Endothelial cell of umbilical vein (primary cell): ENCODE measurements at regions of chr3 and their contacts with region 1.

Region 1: DNA sequence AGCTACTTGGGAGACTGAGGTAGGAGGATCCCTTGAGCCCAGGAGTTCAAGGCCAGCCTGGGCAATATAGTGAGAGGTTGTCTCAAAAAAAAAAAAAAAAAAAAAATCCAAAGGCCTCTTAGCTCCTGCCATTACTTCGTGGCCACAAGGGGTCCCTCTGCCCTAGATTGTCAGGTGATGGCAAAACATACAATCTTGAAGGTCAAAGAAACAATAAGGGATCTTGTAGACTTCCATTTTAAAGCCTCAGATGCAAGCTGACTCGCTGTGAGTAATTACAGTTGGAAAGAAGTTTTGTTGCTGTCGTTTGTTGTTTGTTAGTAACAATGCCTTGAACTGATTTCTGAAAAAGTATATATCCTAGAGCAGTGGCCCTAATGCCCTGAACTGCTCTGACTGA is 55.9 kb upstream of the PLCL2 start:
- DNase-seq: peak; percentile 80
- H3K4me3 ChIP-seq: no peak overlapping the region
- H3K27ac ChIP-seq: peak overlapping the region; percentile 63
- H3K4me1 ChIP-seq: peaks cover 6% of the 10 kb centered on the region
- H3K27me3 ChIP-seq: no peaks in the 10 kb centered on the region
- CTCF ChIP-seq: peak; percentile 63 to 66
- POLR2A ChIP-seq: no peak

Region 2: DNA sequence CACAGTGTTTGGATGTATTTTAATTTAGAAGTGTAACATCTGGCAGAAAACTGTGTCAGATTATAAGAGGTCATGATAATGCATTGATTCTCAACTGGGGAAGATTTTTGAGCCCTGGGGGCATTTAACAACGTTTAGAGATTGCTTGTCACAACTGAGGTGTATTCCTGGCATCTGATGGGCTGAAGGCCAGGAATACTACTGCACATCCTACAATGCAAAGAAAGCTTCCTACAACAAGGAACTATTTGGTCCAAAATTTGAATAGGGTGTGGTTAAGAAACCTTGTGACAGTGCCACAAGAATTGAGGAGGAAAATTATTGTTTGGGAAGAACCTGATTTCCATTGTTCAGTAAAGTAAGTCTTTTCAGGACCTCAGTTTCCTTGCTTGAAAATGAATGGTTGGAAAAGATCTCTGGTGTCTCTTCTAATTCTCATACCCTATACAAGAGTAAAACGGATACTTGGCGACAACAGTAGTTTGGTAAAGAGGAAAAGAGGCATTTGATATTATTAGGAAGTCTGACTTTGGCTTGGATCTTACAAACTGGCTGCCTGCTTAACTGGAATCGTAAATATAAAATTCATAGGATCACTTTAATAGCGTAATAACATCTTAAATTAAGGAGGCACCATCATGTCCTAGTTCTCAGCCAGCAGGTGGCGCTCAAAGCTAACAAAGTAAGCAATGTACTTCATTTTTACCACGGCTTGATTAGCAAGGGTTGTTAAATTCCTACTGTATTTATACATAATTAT is 227.9 kb before region 1 on chr3:
- CTCF ChIA-PET with region 1: interaction called, 14 read pairs
- POLR2A ChIA-PET with region 1: no interaction called
- dilution Hi-C with region 1: no loop called
- intact Hi-C with region 1: loop called (anchors 5 kb)
- DNase-seq: peak; percentile 80
- H3K4me3 ChIP-seq: no peak overlapping the region
- H3K27ac ChIP-seq: no peak overlapping the region
- H3K4me1 ChIP-seq: no peaks in the 10 kb centered on the region
- H3K27me3 ChIP-seq: peaks cover 0 to 6% of the 10 kb centered on the region in 2 experiments
- CTCF ChIP-seq: peak; percentile 56 to 61
- POLR2A ChIP-seq: no peak

Region 3: GRCh38 chr3:16884084-16884747 is 55.4 kb after region 1 on chr3:
- CTCF ChIA-PET with region 1: interaction called, 42 read pairs
- POLR2A ChIA-PET with region 1: no interaction called
- dilution Hi-C with region 1: no loop called
- intact Hi-C with region 1: loop called (anchors 1 kb)
- DNase-seq: peak; percentile 55
- H3K4me3 ChIP-seq: peak overlapping the region; percentile 93 to 97 (median 95)
- H3K27ac ChIP-seq: peak overlapping the region; percentile 50
- H3K4me1 ChIP-seq: peaks cover 16% of the 10 kb centered on the region
- H3K27me3 ChIP-seq: no peaks in the 10 kb centered on the region
- CTCF ChIP-seq: peak; percentile 66 to 86
- POLR2A ChIP-seq: no peak

Region 4: GRCh38 chr3:16982460-16982859 is 153.6 kb after region 1 on chr3:
- CTCF ChIA-PET with region 1: interaction called, 10 read pairs
- POLR2A ChIA-PET with region 1: no interaction called
- dilution Hi-C with region 1: no loop called
- intact Hi-C with region 1: no loop called
- DNase-seq: no peak
- H3K4me3 ChIP-seq: no peak overlapping the region
- H3K27ac ChIP-seq: no peak overlapping the region
- H3K4me1 ChIP-seq: no peaks in the 10 kb centered on the region
- H3K27me3 ChIP-seq: no peaks in the 10 kb centered on the region
- CTCF ChIP-seq: no peak
- POLR2A ChIP-seq: no peak

Region 5: DNA sequence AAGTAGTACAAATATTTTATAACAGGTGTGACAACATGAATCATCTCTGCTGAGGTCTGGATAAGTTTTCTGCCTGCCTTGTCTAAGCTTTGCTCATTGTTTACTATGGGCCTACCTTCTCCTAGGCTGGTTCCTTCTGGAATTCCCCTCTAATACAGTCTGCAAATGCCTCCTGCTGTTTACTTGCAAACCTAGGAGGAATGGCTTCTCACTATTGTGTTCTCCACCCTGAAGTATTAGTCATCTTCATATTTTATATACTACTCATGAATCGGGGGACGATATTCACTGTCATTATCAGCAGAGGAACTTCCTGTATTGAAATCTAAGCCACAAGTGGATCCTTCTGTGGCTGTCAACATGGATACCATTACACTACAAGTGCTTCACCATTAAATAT is 210.8 kb after region 1 on chr3:
- CTCF ChIA-PET with region 1: interaction called, 29 read pairs
- POLR2A ChIA-PET with region 1: no interaction called
- dilution Hi-C with region 1: no loop called
- intact Hi-C with region 1: no loop called
- DNase-seq: peak; percentile 88
- H3K4me3 ChIP-seq: no peak overlapping the region
- H3K27ac ChIP-seq: peak overlapping the region; percentile 56
- H3K4me1 ChIP-seq: peaks cover 25% of the 10 kb centered on the region
- H3K27me3 ChIP-seq: no peaks in the 10 kb centered on the region
- CTCF ChIP-seq: no peak
- POLR2A ChIP-seq: no peak

Region 6: DNA sequence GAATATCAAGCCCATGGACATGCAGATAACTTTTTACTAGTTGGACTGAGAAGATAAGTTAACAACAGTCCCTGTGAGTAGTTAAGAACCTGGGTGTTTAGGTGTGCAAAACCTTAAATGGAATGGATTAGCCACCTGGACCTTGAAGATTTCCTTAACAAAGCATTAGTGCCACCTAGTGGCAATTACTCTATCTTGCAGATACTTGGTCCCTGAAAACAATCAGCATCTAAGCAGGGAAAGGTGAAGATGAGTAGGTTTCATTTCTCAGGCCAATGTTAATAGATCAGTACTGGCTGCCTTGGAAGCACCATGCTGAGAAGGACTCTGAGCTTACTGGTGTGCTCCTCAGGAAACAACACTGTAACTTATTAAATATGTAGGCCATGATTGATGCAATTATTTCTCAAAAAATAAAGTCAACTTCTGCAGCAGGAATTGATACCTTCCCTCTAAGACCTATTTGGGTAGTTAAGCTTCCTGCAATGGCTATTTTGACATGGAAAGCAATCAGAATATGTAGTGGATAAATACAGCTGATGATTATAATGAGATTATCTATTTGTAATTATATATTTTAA is 584.2 kb after region 1 on chr3:
- CTCF ChIA-PET with region 1: interaction called, 5 read pairs
- POLR2A ChIA-PET with region 1: no interaction called
- dilution Hi-C with region 1: no loop called
- intact Hi-C with region 1: loop called (anchors 1 kb)
- DNase-seq: peak; percentile 63
- H3K4me3 ChIP-seq: no peak overlapping the region
- H3K27ac ChIP-seq: no peak overlapping the region
- H3K4me1 ChIP-seq: no peaks in the 10 kb centered on the region
- H3K27me3 ChIP-seq: no peaks in the 10 kb centered on the region
- CTCF ChIP-seq: peak; percentile 56 to 63
- POLR2A ChIP-seq: no peak